ENCODE measurements at regions of chr2 and their contacts with region 1.

Region 1: GRCh38 chr2:165627470-165627869 is 158.0 kb downstream of the CSRNP3 start:
- DNase-seq: no peak
- ATAC-seq: no peak
- H3K4me3 ChIP-seq: no peak overlapping the region
- H3K27ac ChIP-seq: no peak overlapping the region
- H3K4me1 ChIP-seq: no peaks in the 10 kb centered on the region
- H3K27me3 ChIP-seq: 0 out of 2 replicates have a peak, but pooled peaks cover 3% of the 10 kb centered on the region
- CTCF ChIP-seq: no peak
- POLR2A ChIP-seq: no peak
- RAD21 ChIP-seq: no peak

Region 2: DNA sequence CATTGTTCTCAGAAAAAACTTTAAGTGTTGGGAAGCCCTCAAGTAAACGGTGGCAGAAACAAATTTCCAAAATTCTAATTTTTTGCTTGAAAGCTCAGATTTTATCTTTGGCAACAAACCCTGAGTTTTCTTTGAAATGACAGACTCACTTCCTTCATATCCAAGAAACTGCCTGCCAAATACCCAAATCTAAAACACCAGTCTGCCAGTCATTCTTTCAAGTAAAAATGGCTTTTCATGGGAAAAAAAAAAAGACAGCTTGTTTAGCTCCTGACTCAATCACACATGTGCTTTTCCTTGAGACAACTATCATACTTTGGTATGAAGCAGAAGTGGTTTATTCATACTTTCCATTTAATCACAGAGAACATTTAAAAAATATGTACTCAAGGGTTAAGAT is 198.5 kb before region 1 on chr2:
- CTCF ChIA-PET with region 1: no interaction called
- POLR2A ChIA-PET with region 1: no interaction called
- RAD21 ChIA-PET with region 1: no interaction called
- intact Hi-C with region 1: no loop called
- DNase-seq: no peak
- ATAC-seq: no peak
- H3K4me3 ChIP-seq: no peak overlapping the region
- H3K27ac ChIP-seq: no peak overlapping the region
- H3K4me1 ChIP-seq: no peaks in the 10 kb centered on the region
- H3K27me3 ChIP-seq: no peaks in the 10 kb centered on the region
- CTCF ChIP-seq: no peak
- POLR2A ChIP-seq: no peak
- RAD21 ChIP-seq: no peak

Region 3: GRCh38 chr2:165563468-165564225 is 63.8 kb before region 1 on chr2:
- CTCF ChIA-PET with region 1: no interaction called
- POLR2A ChIA-PET with region 1: no interaction called
- RAD21 ChIA-PET with region 1: no interaction called
- intact Hi-C with region 1: loop called (anchors 10 kb)
- DNase-seq: no peak
- ATAC-seq: peak; percentile 69
- H3K4me3 ChIP-seq: no peak overlapping the region
- H3K27ac ChIP-seq: no peak overlapping the region
- H3K4me1 ChIP-seq: no peaks in the 10 kb centered on the region
- H3K27me3 ChIP-seq: 0 out of 2 replicates have a peak, but pooled peaks cover 3% of the 10 kb centered on the region
- CTCF ChIP-seq: peak; percentile 50 to 53 (median 52); a peak in 5 of 6 replicates
- POLR2A ChIP-seq: no peak
- RAD21 ChIP-seq: peak; percentile 40; the same call in 1 of the 2 replicates

Measured in HCT116 (cell line).